AG04449 (cell line): ENCODE measurements at regions of chr15 and their contacts with region 1.

Region 1: GRCh38 chr15:28123408-28124023 is 24.4 kb upstream of the OCA2 start:
- DNase-seq: no peak
- H3K4me3 ChIP-seq: no peak overlapping the region
- CTCF ChIP-seq: peak; percentile 81

Region 2: GRCh38 chr15:27757050-27757449 is 366.5 kb before region 1 on chr15:
- CTCF ChIA-PET with region 1: no interaction called
- POLR2A ChIA-PET with region 1: no interaction called
- DNase-seq: no peak
- H3K4me3 ChIP-seq: no peak overlapping the region
- CTCF ChIP-seq: no peak

Region 3: DNA sequence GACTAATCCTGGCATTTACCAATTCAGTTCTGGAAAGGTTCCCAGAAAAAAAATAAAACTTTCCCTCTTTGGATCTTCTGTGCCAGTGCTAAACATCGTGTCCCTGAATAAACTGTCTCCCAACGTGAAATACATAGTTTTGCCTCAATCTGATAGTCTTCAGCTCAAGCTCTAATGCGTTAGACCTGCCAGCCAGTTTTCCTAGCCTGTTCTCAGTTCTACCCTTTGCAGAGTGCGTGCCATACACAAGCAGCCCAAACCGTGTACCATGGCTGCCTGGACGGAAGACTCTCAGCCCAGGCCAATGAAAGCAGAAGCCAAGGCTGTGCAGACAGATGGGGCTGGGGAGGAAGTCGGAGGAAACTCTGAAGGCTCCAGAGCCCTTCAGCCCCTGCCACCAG is 13.0 kb before region 1 on chr15:
- CTCF ChIA-PET with region 1: interaction called, 89 read pairs
- POLR2A ChIA-PET with region 1: no interaction called
- DNase-seq: no peak
- H3K4me3 ChIP-seq: no peak overlapping the region
- CTCF ChIP-seq: no peak

Region 4: DNA sequence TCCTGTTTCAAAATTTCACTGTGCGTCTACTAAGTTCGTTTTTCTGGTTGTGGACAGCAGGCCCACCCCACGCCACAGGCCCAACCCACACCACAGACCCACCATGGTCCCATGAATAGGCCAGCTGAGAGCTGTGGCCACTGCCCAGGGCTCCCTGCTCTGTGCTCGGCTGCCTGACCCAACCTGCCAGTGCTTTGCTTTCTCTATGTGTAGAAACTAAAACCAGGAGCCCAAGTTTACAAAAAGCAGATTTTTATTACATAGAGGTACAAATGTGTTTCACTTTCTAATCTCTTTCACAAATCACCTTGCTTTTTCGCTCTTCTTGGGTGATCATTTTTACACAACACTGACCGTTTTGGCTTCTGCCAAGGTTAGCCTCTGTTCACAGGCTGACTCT is 129.3 kb after region 1 on chr15:
- CTCF ChIA-PET with region 1: no interaction called
- POLR2A ChIA-PET with region 1: no interaction called
- DNase-seq: no peak
- H3K4me3 ChIP-seq: no peak overlapping the region
- CTCF ChIP-seq: no peak